ENCODE measurements at regions of chr5 and their contacts with region 1.

Region 1: GRCh38 chr5:36151434-36152323 is at the starts of genes LMBRD2 and SKP2:
- DNase-seq: peak; percentile 98
- H3K4me3 Mint-ChIP-seq: peak within 1 kb of the TSS; percentile 96
- H3K27ac Mint-ChIP-seq: peak within 1 kb of the TSS; percentile 76
- H3K4me1 Mint-ChIP-seq: peaks cover 67% of the 10 kb centered on the region
- H3K27me3 Mint-ChIP-seq: no peaks in the 10 kb centered on the region
- total RNA-seq, gene LMBRD2: 7.6 to 8.0 TPM
- total RNA-seq, gene SKP2: 44.4 to 48.1 TPM

Region 2: DNA sequence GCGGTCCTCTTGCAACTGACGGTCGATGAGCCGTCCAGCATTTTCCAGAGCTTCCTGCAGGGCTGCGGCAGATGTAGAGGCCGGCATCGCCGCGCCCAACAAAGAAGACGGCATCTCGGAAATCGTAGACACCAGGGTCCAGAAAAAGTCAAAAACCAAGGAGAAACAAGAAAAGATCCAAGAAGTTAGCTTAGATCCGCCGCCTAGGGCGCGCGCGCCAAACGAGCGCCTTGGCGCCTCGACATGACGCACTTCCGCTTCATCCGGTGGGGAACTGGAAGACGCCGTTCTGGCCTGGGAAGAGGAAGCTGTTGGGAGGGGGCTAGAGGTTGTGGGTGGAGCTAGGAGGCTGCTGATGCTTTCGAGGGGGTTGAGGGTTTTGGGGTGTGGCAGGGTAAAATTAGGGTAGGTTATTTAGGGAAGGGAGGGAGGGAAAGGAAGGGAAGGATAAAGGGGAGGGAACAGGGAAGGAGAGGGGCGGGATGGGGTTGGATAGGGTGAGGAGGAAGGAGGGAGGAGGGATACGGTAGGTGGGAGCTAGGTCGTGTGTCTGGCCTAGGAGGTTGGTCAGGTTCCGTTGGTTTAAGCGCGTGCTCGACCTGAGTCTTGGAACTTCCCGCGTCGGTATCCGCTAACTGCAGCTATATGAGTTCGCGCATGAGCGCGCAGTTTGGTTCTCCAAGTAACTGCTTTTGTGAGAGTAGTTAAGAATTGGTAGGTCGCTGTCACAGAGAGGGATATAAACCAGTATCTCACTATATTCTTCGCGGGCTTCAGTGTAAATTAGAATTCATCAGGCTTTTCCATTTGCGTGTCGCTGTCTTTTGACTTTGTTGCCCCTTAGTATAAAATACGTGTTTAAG is 1219.4 kb after region 1 on chr5 and contains the start of gene NUP155:
- CTCF ChIA-PET with region 1: no interaction called
- intact Hi-C with region 1: loop called (anchors 5 kb)
- DNase-seq: peak; percentile 94
- H3K4me3 Mint-ChIP-seq: peak within 1 kb of the TSS; percentile 99
- H3K27ac Mint-ChIP-seq: peak within 1 kb of the TSS; percentile 96
- H3K4me1 Mint-ChIP-seq: peaks cover 37% of the 10 kb centered on the region
- H3K27me3 Mint-ChIP-seq: no peaks in the 10 kb centered on the region
- total RNA-seq, gene NUP155: 79.2 to 87.8 TPM